Activated T-helper 1 cell treated with anti-CD3 and anti-CD28 coated beads, Interleukin-12 subunit alpha, Interleukin-12 subunit beta, Interleukin-2, Interleukin-4 antibody, amounts not matched to agents 30 ng/mL and 10 ng/mL and 1 ng/mL, durations not matched to agents 14 hours and 24 hours and 36 hours (primary cell): ENCODE measurements at regions of chr11 and their contacts with region 1.

Region 1: DNA sequence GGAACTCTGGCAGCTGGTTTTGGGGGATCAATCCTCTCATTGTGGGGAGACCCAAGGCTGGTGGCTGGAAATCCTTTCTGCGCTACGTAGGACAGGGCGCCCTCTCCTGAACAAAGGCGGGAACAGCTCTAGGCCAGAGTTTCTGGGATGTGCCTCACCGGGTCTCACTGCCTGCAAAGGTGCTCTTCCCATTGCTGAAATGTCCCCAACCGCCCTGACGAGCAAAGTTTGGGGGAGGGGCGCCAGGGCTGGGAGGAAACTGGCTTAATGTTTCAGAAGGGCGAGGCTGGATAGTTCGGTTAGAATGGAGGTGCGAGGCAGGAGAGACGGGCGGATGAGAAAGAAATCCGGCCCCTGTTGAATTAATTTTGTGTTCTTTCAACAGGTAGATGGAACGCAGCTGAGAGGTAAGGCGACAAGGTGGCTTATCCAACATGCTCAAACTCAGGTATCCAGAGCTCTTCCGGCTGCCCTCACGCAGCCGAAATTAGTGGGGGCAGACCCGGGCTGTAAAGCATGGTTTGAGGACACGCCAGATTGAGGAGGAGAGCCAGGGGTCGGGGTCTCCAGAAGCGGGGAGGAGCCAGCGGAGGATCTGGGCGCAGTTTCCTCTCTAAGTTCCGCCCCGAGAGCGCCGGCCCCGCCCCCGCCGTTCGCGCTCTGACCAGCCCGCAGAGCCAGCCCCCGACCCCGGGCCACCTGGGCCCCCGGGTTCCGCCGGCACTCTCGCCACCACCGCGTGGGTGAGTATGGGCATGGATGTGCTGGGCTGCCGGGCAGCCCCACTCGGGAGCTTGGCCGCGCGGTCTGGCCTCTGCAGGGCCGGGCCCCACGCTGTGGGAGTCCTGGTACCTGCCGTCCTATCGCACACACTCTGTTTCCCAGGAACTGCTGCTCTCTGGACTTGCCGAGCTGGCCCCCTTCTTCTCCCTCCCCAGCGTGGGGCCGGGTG is at the start of gene PGAP2:
- DNase-seq: peak; percentile 55
- H3K4me3 Mint-ChIP-seq: peak within 1 kb of the TSS; percentile 99
- H3K27ac Mint-ChIP-seq: peak within 1 kb of the TSS; percentile 91
- H3K4me1 Mint-ChIP-seq: peaks cover 22% of the 10 kb centered on the region
- H3K27me3 Mint-ChIP-seq: no peaks in the 10 kb centered on the region
- total RNA-seq, gene PGAP2: 29.8 and 30.1 TPM in 2 replicates

Region 2: GRCh38 chr11:3723014-3723708 is 85.0 kb before region 1 on chr11:
- intact Hi-C with region 1: loop called (anchors 5 kb)
- DNase-seq: no peak
- H3K4me3 Mint-ChIP-seq: no peak overlapping the region
- H3K27ac Mint-ChIP-seq: no peak overlapping the region
- H3K4me1 Mint-ChIP-seq: peaks cover 6% of the 10 kb centered on the region
- H3K27me3 Mint-ChIP-seq: no peaks in the 10 kb centered on the region

Region 3: DNA sequence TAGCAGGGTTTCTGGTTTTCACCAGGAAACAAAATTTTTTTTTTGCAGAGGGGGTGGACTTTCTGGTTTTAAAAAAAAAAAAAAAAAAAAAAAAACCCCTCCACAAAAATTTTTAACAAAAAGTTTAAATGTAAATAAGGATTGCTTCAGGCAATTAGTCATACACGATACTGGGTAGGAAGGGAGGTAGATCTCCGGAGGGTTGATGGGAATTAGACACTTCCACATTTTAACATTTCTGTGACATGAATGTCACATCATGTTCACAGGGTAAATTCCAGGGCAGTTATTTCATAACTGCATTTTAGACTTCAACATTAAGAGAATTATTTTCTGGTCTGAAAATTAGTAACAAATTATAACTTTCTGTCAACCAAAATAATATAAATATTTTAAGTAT is 26.8 kb before region 1 on chr11:
- intact Hi-C with region 1: loop called (anchors 1 kb)
- DNase-seq: no peak
- H3K4me3 Mint-ChIP-seq: peak overlapping the region; percentile 47
- H3K27ac Mint-ChIP-seq: peak overlapping the region; percentile 71
- H3K4me1 Mint-ChIP-seq: peaks cover 58% of the 10 kb centered on the region
- H3K27me3 Mint-ChIP-seq: no peaks in the 10 kb centered on the region

Region 4: DNA sequence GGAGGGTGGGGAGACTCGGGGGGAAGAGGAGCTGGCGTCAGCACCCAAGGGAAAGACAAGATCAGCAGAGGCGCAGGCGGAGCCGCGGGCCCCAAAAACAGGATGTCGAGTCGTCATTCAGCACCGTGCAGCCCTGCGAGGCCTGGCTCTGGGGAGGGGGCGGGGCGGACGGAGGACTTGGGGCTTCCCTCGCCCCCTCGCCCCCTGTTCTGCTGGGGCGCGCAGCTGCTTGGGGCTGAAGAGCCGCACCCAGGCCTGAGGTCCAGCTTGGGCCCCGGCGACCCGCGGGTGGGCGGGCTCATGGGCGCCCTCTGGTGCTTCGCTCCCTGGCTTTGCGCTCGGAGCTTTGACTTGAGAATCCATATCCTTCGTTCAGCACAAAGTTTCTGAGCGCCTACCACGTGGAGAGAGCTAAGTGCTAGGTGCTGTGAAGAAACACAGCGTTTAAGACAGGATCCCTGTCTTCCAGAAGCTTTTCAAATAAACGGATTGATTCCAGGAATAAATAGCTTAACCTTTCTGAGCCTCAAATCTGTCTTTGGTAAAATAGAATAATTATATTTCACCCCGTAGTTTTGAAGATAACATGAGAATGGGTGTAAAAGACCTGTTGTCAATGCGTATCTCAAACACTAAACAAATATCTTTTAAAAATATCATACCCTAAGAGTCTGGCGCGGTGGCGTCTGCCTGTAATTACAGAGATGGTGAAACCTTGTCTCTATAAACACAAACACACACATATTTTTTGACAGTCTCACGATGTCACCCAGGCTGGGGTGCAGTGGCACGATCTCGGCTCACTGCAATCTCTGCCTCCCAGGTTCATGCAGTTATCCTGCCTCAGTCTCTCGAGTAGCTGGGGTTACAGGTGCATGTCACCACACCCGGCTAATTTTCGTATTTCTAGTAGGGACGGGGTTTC is 33.5 kb after region 1 on chr11:
- intact Hi-C with region 1: loop called (anchors 1 kb)
- DNase-seq: peak; percentile 89
- H3K4me3 Mint-ChIP-seq: peak overlapping the region; percentile 81
- H3K27ac Mint-ChIP-seq: peak overlapping the region; percentile 97
- H3K4me1 Mint-ChIP-seq: peaks cover 59% of the 10 kb centered on the region
- H3K27me3 Mint-ChIP-seq: no peaks in the 10 kb centered on the region

Region 5: GRCh38 chr11:3980961-3981633 is 172.9 kb after region 1 on chr11:
- intact Hi-C with region 1: no loop called
- DNase-seq: no peak
- H3K4me3 Mint-ChIP-seq: no peak overlapping the region
- H3K27ac Mint-ChIP-seq: no peak overlapping the region
- H3K4me1 Mint-ChIP-seq: peaks cover 69% of the 10 kb centered on the region
- H3K27me3 Mint-ChIP-seq: no peaks in the 10 kb centered on the region

Region 6: GRCh38 chr11:3995949-3996554 is 187.9 kb after region 1 on chr11:
- intact Hi-C with region 1: no loop called
- DNase-seq: no peak
- H3K4me3 Mint-ChIP-seq: no peak overlapping the region
- H3K27ac Mint-ChIP-seq: no peak overlapping the region
- H3K4me1 Mint-ChIP-seq: peaks cover 21% of the 10 kb centered on the region
- H3K27me3 Mint-ChIP-seq: no peaks in the 10 kb centered on the region